ENCODE measurements at regions of chr19 and their contacts with region 1.

Region 1: DNA sequence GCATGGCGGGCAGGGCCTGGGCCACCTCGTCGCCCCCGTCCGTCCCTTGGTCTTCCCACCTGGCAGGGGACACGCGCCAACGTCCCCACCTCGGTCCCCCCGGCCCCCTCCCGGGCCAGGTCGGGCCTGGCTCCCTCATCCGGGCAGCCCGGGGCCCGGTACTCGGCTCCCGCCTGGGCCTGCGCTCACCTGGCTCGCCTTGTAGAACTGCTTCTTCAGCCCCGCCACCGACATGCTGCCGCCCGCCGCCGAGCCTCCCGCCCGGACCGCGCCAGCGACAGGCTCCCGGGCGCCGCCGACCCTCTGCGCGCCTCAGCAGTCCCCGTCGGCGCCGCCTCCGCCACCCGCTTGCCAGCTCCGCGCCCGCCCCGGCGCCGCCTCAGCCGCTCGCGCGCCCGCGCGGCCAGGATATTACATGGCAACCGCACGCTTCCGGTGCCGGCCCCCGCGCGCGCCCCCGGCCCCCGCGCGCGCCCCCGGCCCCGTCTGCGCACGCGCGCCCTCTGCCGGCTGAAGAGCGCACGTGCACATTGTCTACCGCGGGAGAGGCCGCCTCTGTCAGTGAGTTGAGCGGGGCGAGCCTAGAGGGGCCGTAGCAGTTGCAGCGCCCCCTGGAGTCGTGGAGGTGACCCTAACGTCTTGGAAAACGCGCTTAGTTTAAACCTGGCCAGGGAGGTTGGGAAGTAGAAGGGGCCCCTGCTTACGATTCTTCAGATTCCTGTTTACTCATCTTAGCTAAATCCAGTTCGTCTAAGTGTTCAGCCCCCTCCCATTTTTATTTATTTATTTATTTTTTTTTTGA is at the start of gene SH3GL1:
- DNase-seq: peak; percentile 88
- H3K4me3 Mint-ChIP-seq: peak within 1 kb of the TSS; percentile 96
- H3K27ac Mint-ChIP-seq: peak within 1 kb of the TSS; percentile 94
- H3K4me1 Mint-ChIP-seq: peaks cover 71% of the 10 kb centered on the region
- H3K27me3 Mint-ChIP-seq: peaks cover 3% of the 10 kb centered on the region
- total RNA-seq, gene SH3GL1: 50.3 and 54.2 TPM in 2 replicates

Region 2: GRCh38 chr19:4065430-4066175 is 334.7 kb before region 1 on chr19:
- intact Hi-C with region 1: loop called (anchors 5 kb)
- DNase-seq: peak; percentile 97
- H3K4me3 Mint-ChIP-seq: peak overlapping the region; percentile 64
- H3K27ac Mint-ChIP-seq: no peak overlapping the region
- H3K4me1 Mint-ChIP-seq: peaks cover 16% of the 10 kb centered on the region
- H3K27me3 Mint-ChIP-seq: no peaks in the 10 kb centered on the region

Region 3: GRCh38 chr19:4267101-4267900 is 133.0 kb before region 1 on chr19:
- intact Hi-C with region 1: loop called (anchors 1 kb)
- DNase-seq: peak; percentile 40
- H3K4me3 Mint-ChIP-seq: no peak overlapping the region
- H3K27ac Mint-ChIP-seq: peak overlapping the region; percentile 9
- H3K4me1 Mint-ChIP-seq: peaks cover 17% of the 10 kb centered on the region
- H3K27me3 Mint-ChIP-seq: no peaks in the 10 kb centered on the region

Region 4: DNA sequence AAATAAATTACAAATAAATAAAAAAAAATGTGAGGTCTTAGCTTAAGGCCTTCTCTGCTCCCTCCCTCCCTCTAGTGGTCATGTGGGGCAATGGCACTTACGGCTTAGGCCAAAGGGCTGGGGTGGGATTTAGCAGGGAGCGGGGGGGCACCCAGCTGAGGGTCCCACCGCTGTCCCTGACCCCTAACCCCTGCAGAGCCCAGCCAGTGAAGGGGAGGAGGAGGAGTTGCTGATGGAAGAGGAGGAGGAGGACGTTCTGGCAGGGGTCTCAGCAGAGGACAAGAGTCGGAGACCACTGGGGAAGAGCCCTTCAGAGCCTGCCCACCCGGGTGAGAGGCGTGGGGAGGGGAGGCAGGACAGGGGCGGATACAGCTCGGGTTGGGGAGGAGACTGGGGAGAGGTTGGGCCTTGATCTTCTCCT is 47.6 kb before region 1 on chr19:
- intact Hi-C with region 1: no loop called
- DNase-seq: no peak
- H3K4me3 Mint-ChIP-seq: no peak overlapping the region
- H3K27ac Mint-ChIP-seq: no peak overlapping the region
- H3K4me1 Mint-ChIP-seq: no peaks in the 10 kb centered on the region
- H3K27me3 Mint-ChIP-seq: no peaks in the 10 kb centered on the region

Region 5: DNA sequence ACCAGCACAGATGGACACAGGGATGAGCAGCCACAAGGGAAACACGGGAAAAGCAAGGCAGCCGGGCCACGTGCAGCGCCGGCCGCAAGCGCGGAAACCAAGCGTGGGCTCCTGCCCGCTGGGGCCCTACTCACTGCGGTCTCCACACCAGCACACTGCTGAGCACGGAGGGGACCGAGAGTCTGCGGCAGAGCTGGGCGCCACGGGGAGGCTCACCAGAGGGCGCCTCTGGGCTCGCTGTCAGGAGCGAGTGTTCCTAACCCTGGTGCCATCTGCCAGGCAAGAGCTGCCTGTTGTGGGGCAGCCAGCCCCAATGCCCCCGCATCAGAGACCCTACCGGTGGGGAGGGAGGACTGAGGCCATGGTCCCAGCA is 30.5 kb before region 1 on chr19:
- intact Hi-C with region 1: loop called (anchors 1 kb)
- DNase-seq: peak; percentile 67
- H3K4me3 Mint-ChIP-seq: peak overlapping the region; percentile 69
- H3K27ac Mint-ChIP-seq: peak overlapping the region; percentile 92
- H3K4me1 Mint-ChIP-seq: peaks cover 42% of the 10 kb centered on the region
- H3K27me3 Mint-ChIP-seq: no peaks in the 10 kb centered on the region

Region 6: DNA sequence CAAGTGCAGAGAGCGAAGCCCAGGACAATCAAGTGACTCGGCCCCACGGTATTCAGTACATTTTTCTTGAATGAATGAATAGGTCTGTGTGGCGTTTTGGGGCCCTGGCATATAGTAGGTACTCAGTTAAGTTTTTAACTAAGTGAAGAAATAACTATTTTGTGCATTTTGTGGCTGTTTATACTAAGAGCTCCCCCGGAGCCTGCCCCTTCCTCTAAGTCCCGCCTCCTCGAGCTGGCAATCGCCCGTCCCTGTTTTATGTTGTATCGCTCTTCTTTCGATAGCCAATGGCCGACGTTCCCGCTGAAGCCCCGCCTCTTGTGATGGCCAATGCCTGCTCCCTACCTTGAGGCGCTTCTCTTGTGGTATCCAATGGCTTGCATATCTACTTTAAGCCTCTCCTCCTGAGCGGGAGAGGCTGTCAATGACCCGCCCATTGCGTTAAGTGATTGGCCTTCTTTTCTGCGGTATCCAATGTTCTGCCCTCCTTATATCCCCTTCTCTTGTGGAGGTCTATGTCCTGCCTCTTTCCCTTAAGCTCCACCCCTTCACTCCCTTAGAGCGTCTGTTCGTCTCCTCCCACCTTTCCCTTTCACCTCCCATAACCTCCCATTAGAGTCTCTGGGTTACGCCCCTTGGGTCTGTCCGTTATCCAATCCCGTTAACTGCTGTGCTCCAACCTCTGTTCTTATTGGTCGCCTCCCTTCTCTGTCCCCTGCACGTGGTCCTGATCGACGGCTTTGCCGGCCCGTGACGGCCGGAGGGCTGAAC is 71.3 kb after region 1 on chr19:
- intact Hi-C with region 1: loop called (anchors 1 kb)
- DNase-seq: peak; percentile 97
- H3K4me3 Mint-ChIP-seq: no peak overlapping the region
- H3K27ac Mint-ChIP-seq: no peak overlapping the region
- H3K4me1 Mint-ChIP-seq: peaks cover 18% of the 10 kb centered on the region
- H3K27me3 Mint-ChIP-seq: no peaks in the 10 kb centered on the region